B cell (primary cell): ENCODE measurements at regions of chr11 and their contacts with region 1.

Region 1: DNA sequence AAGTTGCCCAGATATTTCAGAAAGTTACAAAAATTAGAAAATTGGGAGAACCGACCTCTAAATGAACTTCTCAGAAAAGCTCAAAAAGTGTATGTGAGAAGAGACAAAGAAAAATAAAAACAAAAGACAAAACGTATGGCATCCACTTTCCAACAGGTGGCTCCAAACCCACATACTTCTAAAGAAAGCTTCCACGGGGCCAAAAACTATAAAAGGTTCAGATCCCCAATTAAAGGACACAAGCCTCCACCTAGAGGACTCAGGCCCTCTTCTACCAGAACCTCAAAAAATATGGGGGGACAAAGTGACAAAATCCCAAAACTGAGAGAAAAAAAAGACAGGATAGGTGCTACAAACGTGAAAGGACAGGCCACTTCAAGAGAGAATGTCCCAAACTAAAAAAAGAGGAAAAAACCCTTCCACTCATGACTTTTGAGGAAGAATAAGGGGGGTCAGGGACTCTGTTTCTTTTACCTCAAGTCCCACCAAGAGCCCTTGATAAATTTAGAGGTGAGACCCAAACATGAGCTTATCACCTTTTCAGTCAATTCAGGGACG is 8.8 kb downstream of the SCGB2A1 start:
- DNase-seq: no peak
- ATAC-seq: no peak
- H3K4me3 ChIP-seq: no peak overlapping the region
- H3K4me3 Mint-ChIP-seq: no peak overlapping the region
- H3K27ac ChIP-seq: no peak overlapping the region
- H3K27ac Mint-ChIP-seq: no peak overlapping the region
- H3K4me1 ChIP-seq: no peaks in the 10 kb centered on the region
- H3K4me1 Mint-ChIP-seq: no peaks in the 10 kb centered on the region
- H3K27me3 ChIP-seq: peaks cover 0 to 4% (median 0%) of the 10 kb centered on the region in 4 experiments
- H3K27me3 Mint-ChIP-seq: peaks cover 34% of the 10 kb centered on the region
- CTCF ChIP-seq: no peak

Region 2: GRCh38 chr11:62372871-62373270 is 155.6 kb after region 1 on chr11:
- CTCF ChIA-PET with region 1: no interaction called
- POLR2A ChIA-PET with region 1: no interaction called
- intact Hi-C with region 1: loop called (anchors 5 kb)
- DNase-seq: no peak
- ATAC-seq: no peak
- H3K4me3 ChIP-seq: no peak overlapping the region
- H3K4me3 Mint-ChIP-seq: no peak overlapping the region
- H3K27ac ChIP-seq: no peak overlapping the region
- H3K27ac Mint-ChIP-seq: no peak overlapping the region
- H3K4me1 ChIP-seq: peaks cover 0 to 2% of the 10 kb centered on the region in 2 donors
- H3K4me1 Mint-ChIP-seq: no peaks in the 10 kb centered on the region
- H3K27me3 ChIP-seq: no peaks in the 10 kb centered on the region
- H3K27me3 Mint-ChIP-seq: no peaks in the 10 kb centered on the region
- CTCF ChIP-seq: no peak